ENCODE measurements at regions of chr11 and their contacts with region 1.

Region 1: DNA sequence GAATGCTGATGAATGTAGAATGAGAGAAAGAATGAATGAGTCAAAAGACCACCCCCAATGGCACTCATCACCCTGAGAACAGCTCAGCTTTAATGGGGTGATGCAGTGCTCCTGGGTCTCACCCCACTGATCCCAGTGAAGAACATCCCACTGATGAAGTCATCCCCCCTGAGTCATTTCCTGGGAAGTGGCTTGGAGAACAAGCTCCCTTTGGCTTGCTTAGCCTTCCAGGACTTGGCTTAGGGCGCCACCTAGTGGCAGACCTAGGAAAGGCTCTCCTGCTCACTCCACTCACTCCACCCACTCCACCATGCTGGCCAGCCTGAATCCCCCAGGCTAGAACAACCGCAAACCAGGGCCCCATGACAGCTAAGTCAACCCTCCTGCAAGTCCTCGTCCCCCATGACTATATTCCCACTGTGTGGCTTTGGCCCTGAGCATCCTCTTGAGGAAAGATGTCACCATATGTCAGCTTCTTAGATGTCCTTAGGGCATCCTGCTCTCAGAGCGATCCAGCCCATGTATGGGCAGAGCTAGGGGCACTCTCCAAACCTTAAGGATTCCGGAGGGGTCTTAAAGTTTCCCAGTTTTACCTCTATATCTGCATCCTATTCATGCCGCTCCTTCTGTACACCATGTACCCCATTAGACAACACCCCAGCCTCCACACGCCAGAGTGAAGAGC is 17.8 kb upstream of the TMPRSS13 start:
- DNase-seq: peak; percentile 66 to 90 (median 79)
- ATAC-seq: no peak
- H3K4me3 ChIP-seq: no peak overlapping the region
- H3K4me3 Mint-ChIP-seq: peak overlapping the region; percentile 67
- H3K27ac ChIP-seq: no peak overlapping the region
- H3K27ac Mint-ChIP-seq: peak overlapping the region; percentile 86
- H3K4me1 ChIP-seq: peaks cover 69% of the 10 kb centered on the region
- H3K4me1 Mint-ChIP-seq: peaks cover 71% of the 10 kb centered on the region
- H3K27me3 ChIP-seq: no peaks in the 10 kb centered on the region
- H3K27me3 Mint-ChIP-seq: no peaks in the 10 kb centered on the region
- CTCF ChIP-seq: peak; percentile 88

Region 2: DNA sequence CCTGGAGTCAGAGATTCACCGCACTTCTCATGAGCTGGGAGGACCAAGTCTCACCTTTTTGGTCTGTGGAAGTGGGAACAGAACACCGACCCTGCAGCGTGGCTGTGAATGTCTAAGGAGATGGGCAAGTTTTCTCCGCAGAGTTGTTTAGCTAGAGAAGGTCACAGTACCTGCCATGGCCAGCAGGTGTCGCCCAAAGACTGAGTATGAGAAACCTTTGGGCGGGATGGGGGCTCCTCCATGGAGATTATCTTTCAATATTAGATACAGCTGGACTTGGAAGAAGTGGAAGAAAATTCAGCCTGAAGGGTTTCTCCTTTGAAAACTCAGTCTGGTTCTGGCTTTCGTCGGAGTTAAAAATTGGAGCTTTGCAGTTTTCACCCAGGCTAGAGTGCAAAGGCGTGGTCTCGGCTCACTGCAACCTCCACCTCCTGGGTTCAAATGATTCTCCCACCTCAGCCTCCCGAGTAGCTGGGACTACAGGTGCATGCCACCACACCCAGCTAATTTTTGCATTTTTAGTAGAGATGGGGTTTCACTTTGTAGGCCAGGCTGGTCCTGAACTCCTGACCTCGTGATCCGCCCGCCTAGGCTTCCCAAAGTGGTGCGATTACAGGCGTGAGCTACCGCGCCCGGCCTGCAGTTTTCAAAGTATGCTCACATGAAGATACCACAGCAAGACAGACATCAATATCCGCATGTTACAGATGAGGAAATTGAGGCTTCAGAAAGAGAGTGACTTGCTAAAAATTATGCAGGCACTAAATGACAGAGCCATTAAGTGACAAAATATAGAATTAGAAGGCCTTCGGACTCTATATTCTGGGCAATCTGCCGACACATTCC is 139.3 kb before region 1 on chr11:
- CTCF ChIA-PET with region 1: interaction called, 40 read pairs
- POLR2A ChIA-PET with region 1: interaction called, 13 read pairs
- intact Hi-C with region 1: loop called in 1 of 2 experiments (anchors 1 kb)
- DNase-seq: peak; percentile 55 to 88 (median 72)
- ATAC-seq: peak; percentile 85
- H3K4me3 ChIP-seq: no peak overlapping the region
- H3K4me3 Mint-ChIP-seq: no peak overlapping the region
- H3K27ac ChIP-seq: no peak overlapping the region
- H3K27ac Mint-ChIP-seq: no peak overlapping the region
- H3K4me1 ChIP-seq: peaks cover 21% of the 10 kb centered on the region
- H3K4me1 Mint-ChIP-seq: peaks cover 13% of the 10 kb centered on the region
- H3K27me3 ChIP-seq: no peaks in the 10 kb centered on the region
- H3K27me3 Mint-ChIP-seq: no peaks in the 10 kb centered on the region
- CTCF ChIP-seq: peak; percentile 94

Region 3: GRCh38 chr11:117959438-117960149 is 12.6 kb after region 1 on chr11:
- CTCF ChIA-PET with region 1: interaction called, 12 read pairs
- POLR2A ChIA-PET with region 1: interaction called, 13 read pairs
- intact Hi-C with region 1: no loop called
- DNase-seq: no peak
- ATAC-seq: no peak
- H3K4me3 ChIP-seq: no peak overlapping the region
- H3K4me3 Mint-ChIP-seq: no peak overlapping the region
- H3K27ac ChIP-seq: no peak overlapping the region
- H3K27ac Mint-ChIP-seq: no peak overlapping the region
- H3K4me1 ChIP-seq: peaks cover 5% of the 10 kb centered on the region
- H3K4me1 Mint-ChIP-seq: peaks cover 73% of the 10 kb centered on the region
- H3K27me3 ChIP-seq: no peaks in the 10 kb centered on the region
- H3K27me3 Mint-ChIP-seq: no peaks in the 10 kb centered on the region
- CTCF ChIP-seq: no peak

Region 4: DNA sequence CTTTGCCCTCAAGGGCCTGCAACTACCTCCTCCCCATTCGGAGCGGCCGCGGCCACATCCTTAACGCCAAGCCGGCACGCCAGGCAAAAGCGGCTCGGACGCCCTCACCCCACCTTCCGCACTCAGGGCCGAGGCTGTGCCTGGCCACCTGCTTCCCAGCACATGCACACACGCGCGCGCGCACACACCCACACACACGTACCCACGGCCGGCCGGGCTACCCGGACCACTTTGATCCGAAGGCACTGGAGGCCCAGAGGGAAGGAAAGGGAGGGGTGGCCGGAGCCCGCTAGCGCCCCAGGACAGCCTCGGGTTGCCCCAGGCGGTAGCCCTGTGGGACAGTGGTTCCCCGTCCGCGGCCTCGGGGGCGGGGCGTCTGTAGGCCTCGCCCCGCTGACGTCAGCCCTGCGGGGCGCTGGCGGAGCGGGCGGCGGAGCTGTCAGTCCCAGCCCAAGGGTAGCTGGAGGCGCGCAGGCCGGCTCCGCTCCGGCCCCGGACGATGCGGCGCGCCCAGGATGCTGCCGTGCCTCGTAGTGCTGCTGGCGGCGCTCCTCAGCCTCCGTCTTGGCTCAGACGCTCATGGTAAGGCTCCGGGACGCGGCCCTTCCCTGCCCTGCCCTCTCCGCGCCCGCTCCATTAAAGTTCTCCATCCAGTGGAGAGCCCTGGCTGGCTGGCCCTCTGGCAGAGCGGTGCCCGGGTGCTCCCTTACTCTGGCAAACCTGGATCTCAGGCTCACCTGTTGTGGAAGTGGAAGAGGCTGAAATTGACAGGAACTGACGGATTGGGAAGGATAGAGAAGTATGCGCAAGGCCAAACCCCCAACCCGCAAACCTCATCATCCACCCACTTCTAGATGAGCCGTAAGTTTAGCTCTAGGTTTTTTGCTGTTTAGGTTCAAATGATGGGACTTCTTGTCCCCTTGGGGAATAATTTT is 39.2 kb after region 1 on chr11 and contains the start of gene IL10RA:
- CTCF ChIA-PET with region 1: interaction called, 37 read pairs
- POLR2A ChIA-PET with region 1: interaction called, 240 read pairs
- intact Hi-C with region 1: loop called (anchors 1 to 2 kb)
- DNase-seq: peak; percentile 57 to 93 (median 78)
- ATAC-seq: peak; percentile 72
- H3K4me3 ChIP-seq: peak within 1 kb of the TSS; percentile 98
- H3K4me3 Mint-ChIP-seq: peak within 1 kb of the TSS; percentile 90
- H3K27ac ChIP-seq: peak within 1 kb of the TSS; percentile 88 to 93
- H3K27ac Mint-ChIP-seq: peak within 1 kb of the TSS; percentile 87
- H3K4me1 ChIP-seq: peaks cover 66% of the 10 kb centered on the region
- H3K4me1 Mint-ChIP-seq: peaks cover 72% of the 10 kb centered on the region
- H3K27me3 ChIP-seq: no peaks in the 10 kb centered on the region
- H3K27me3 Mint-ChIP-seq: no peaks in the 10 kb centered on the region
- CTCF ChIP-seq: no peak
- total RNA-seq, gene IL10RA: 193 to 203 TPM

Region 5: DNA sequence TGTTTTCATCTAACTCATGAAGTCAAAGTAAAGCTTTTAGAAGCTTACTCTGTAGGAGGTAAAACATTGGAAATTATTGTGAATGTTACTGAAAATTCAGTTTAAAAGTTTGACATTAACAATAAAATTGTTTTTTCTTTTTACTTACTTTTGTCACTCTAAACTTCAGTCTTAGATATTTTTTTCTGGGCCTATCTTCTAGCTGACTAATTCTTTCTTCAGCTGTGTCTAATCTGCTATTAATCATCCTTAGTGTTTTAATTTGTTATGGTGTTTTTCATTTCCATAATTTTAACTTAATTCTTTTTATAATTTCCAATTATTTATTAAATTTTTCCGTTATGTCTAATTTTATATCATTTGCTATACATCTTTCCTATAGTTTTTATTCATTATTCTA is 74.2 kb after region 1 on chr11:
- CTCF ChIA-PET with region 1: interaction called, 4 read pairs
- POLR2A ChIA-PET with region 1: interaction called, 10 read pairs
- intact Hi-C with region 1: no loop called
- DNase-seq: no peak
- ATAC-seq: no peak
- H3K4me3 ChIP-seq: no peak overlapping the region
- H3K4me3 Mint-ChIP-seq: no peak overlapping the region
- H3K27ac ChIP-seq: no peak overlapping the region
- H3K27ac Mint-ChIP-seq: no peak overlapping the region
- H3K4me1 ChIP-seq: peaks cover 9% of the 10 kb centered on the region
- H3K4me1 Mint-ChIP-seq: peaks cover 19% of the 10 kb centered on the region
- H3K27me3 ChIP-seq: no peaks in the 10 kb centered on the region
- H3K27me3 Mint-ChIP-seq: no peaks in the 10 kb centered on the region
- CTCF ChIP-seq: no peak